ENCODE measurements at regions of chr4 and their contacts with region 1.

Region 1: DNA sequence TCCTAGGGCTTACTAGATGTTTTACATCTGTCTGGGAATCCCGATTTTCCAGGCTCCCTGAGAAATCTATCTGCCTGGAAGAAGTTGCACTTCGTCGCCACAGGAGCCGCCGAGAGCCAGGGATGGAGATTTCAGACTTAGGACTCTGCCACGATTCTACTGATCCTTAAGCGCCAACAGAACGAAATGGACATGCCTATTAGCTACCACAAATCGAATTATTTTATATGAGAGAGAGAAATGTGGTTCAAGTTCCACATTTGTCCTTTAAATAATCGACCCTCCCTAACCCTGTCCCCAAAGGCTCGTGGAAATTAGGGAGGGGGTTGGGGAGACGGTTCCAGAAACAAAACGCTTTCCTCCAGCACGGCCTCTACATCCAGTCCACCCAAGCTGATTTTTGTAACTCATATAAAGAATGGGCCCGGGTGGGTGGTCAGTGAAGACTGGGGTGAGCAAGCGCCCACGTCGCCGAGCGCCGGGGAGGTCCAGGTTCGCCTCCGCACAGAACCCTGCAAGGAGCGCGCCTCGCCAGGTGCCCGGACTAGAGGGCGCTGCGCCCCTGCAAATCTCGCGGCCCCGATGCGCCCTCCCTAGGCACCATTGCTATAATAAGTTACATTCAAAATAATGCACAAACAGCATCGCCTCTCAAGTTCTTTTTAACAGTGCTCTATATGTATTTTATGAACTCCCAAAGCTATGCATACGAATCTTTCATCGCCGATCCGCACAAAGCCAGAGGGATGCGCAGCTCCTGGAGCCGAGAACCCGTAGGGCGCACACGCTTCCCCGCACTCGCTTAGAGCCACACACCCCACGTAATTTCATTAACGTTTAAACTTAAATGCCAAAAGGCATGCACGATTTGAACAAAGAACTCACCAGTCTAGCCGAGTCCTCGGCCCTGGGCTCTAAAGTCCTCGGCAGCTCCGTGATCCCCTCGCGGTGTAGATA is 2.1 kb upstream of the FAT1 start:
- DNase-seq: peak; percentile 72 to 82
- H3K4me3 ChIP-seq: peak overlapping the region; percentile 83
- H3K4me3 Mint-ChIP-seq: peak overlapping the region; percentile 92
- H3K27ac Mint-ChIP-seq: peak overlapping the region; percentile 63
- H3K4me1 ChIP-seq: peaks cover 6% of the 10 kb centered on the region; the same call in 1 of the 2 replicates
- H3K4me1 Mint-ChIP-seq: peaks cover 9% of the 10 kb centered on the region
- H3K27me3 ChIP-seq: no peaks in the 10 kb centered on the region
- H3K27me3 Mint-ChIP-seq: no peaks in the 10 kb centered on the region
- CTCF ChIP-seq: peak; percentile 60 to 80

Region 2: GRCh38 chr4:186472948-186473347 is 252.8 kb before region 1 on chr4:
- CTCF ChIA-PET with region 1: no interaction called
- POLR2A ChIA-PET with region 1: no interaction called
- intact Hi-C with region 1: loop called (anchors 10 kb)
- DNase-seq: no peak
- H3K4me3 ChIP-seq: no peak overlapping the region
- H3K4me3 Mint-ChIP-seq: no peak overlapping the region
- H3K27ac Mint-ChIP-seq: no peak overlapping the region
- H3K4me1 ChIP-seq: no peaks in the 10 kb centered on the region
- H3K4me1 Mint-ChIP-seq: no peaks in the 10 kb centered on the region
- H3K27me3 ChIP-seq: no peaks in the 10 kb centered on the region
- H3K27me3 Mint-ChIP-seq: peaks cover 11% of the 10 kb centered on the region
- CTCF ChIP-seq: peak; percentile 30 to 45

Region 3: GRCh38 chr4:186669159-186669731 is 56.5 kb before region 1 on chr4:
- CTCF ChIA-PET with region 1: interaction called, 6 read pairs
- POLR2A ChIA-PET with region 1: interaction called, 7 read pairs
- intact Hi-C with region 1: loop called (anchors 1 kb)
- DNase-seq: peak in 1 of 2 experiments; percentile 32
- H3K4me3 ChIP-seq: no peak overlapping the region
- H3K4me3 Mint-ChIP-seq: no peak overlapping the region
- H3K27ac Mint-ChIP-seq: no peak overlapping the region
- H3K4me1 ChIP-seq: peaks cover 15% of the 10 kb centered on the region; the same call in 1 of the 2 replicates
- H3K4me1 Mint-ChIP-seq: peaks cover 9% of the 10 kb centered on the region
- H3K27me3 ChIP-seq: no peaks in the 10 kb centered on the region
- H3K27me3 Mint-ChIP-seq: no peaks in the 10 kb centered on the region
- CTCF ChIP-seq: peak; percentile 37 to 48

Region 4: GRCh38 chr4:186699290-186699689 is 26.5 kb before region 1 on chr4:
- CTCF ChIA-PET with region 1: no interaction called
- POLR2A ChIA-PET with region 1: no interaction called
- intact Hi-C with region 1: loop called (anchors 2 kb)
- DNase-seq: peak in 1 of 2 experiments; percentile 34
- H3K4me3 ChIP-seq: no peak overlapping the region
- H3K4me3 Mint-ChIP-seq: peak overlapping the region; percentile 19
- H3K27ac Mint-ChIP-seq: no peak overlapping the region
- H3K4me1 ChIP-seq: peaks cover 47% of the 10 kb centered on the region
- H3K4me1 Mint-ChIP-seq: peaks cover 48% of the 10 kb centered on the region
- H3K27me3 ChIP-seq: no peaks in the 10 kb centered on the region
- H3K27me3 Mint-ChIP-seq: no peaks in the 10 kb centered on the region
- CTCF ChIP-seq: no peak

Region 5: GRCh38 chr4:186829740-186830449 is 104.1 kb after region 1 on chr4:
- CTCF ChIA-PET with region 1: no interaction called
- POLR2A ChIA-PET with region 1: no interaction called
- intact Hi-C with region 1: loop called (anchors 5 kb)
- DNase-seq: no peak
- H3K4me3 ChIP-seq: no peak overlapping the region
- H3K4me3 Mint-ChIP-seq: no peak overlapping the region
- H3K27ac Mint-ChIP-seq: no peak overlapping the region
- H3K4me1 ChIP-seq: peaks cover 8% of the 10 kb centered on the region; the same call in 1 of the 2 replicates
- H3K4me1 Mint-ChIP-seq: no peaks in the 10 kb centered on the region
- H3K27me3 ChIP-seq: no peaks in the 10 kb centered on the region
- H3K27me3 Mint-ChIP-seq: no peaks in the 10 kb centered on the region
- CTCF ChIP-seq: no peak

Region 6: GRCh38 chr4:186946682-186947294 is 221.0 kb after region 1 on chr4:
- CTCF ChIA-PET with region 1: interaction called, 4 read pairs
- POLR2A ChIA-PET with region 1: no interaction called
- intact Hi-C with region 1: loop called (anchors 1 kb)
- DNase-seq: peak; percentile 72
- H3K4me3 ChIP-seq: no peak overlapping the region
- H3K4me3 Mint-ChIP-seq: no peak overlapping the region
- H3K27ac Mint-ChIP-seq: no peak overlapping the region
- H3K4me1 ChIP-seq: no peaks in the 10 kb centered on the region
- H3K4me1 Mint-ChIP-seq: peaks cover 5% of the 10 kb centered on the region
- H3K27me3 ChIP-seq: no peaks in the 10 kb centered on the region
- H3K27me3 Mint-ChIP-seq: peaks cover 3% of the 10 kb centered on the region
- CTCF ChIP-seq: peak; percentile 50 to 84

Region 7: GRCh38 chr4:186979961-186980745 is 254.4 kb after region 1 on chr4:
- CTCF ChIA-PET with region 1: no interaction called
- POLR2A ChIA-PET with region 1: no interaction called
- intact Hi-C with region 1: no loop called
- DNase-seq: no peak
- H3K4me3 ChIP-seq: no peak overlapping the region
- H3K4me3 Mint-ChIP-seq: no peak overlapping the region
- H3K27ac Mint-ChIP-seq: no peak overlapping the region
- H3K4me1 ChIP-seq: no peaks in the 10 kb centered on the region
- H3K4me1 Mint-ChIP-seq: no peaks in the 10 kb centered on the region
- H3K27me3 ChIP-seq: no peaks in the 10 kb centered on the region
- H3K27me3 Mint-ChIP-seq: no peaks in the 10 kb centered on the region
- CTCF ChIP-seq: no peak

Region 8: GRCh38 chr4:187071946-187072600 is 346.3 kb after region 1 on chr4:
- CTCF ChIA-PET with region 1: no interaction called
- POLR2A ChIA-PET with region 1: no interaction called
- intact Hi-C with region 1: no loop called
- DNase-seq: no peak
- H3K4me3 ChIP-seq: no peak overlapping the region
- H3K4me3 Mint-ChIP-seq: no peak overlapping the region
- H3K27ac Mint-ChIP-seq: no peak overlapping the region
- H3K4me1 ChIP-seq: no peaks in the 10 kb centered on the region
- H3K4me1 Mint-ChIP-seq: no peaks in the 10 kb centered on the region
- H3K27me3 ChIP-seq: no peaks in the 10 kb centered on the region; the same call in 1 of the 2 replicates
- H3K27me3 Mint-ChIP-seq: peaks cover 11% of the 10 kb centered on the region
- CTCF ChIP-seq: no peak